T-cell (primary cell): ENCODE measurements at regions of chr16 and their contacts with region 1.

Region 1: GRCh38 chr16:10509534-10510025 is 70.8 kb downstream of the EMP2 start:
- DNase-seq: peak; percentile 15 to 86 (median 46)
- ATAC-seq: peak; percentile 87 to 92 (median 90)
- H3K4me3 ChIP-seq: no peak overlapping the region
- H3K4me3 Mint-ChIP-seq: no peak overlapping the region
- H3K27ac ChIP-seq: no peak overlapping the region
- H3K27ac Mint-ChIP-seq: no peak overlapping the region
- H3K4me1 ChIP-seq: no peaks in the 10 kb centered on the region
- H3K4me1 Mint-ChIP-seq: peaks cover 3 to 7% (median 4%) of the 10 kb centered on the region in 3 donors
- H3K27me3 ChIP-seq: no peaks in the 10 kb centered on the region
- H3K27me3 Mint-ChIP-seq: peaks cover 0 to 4% of the 10 kb centered on the region in 2 donors

Region 2: GRCh38 chr16:10314811-10315210 is 194.8 kb before region 1 on chr16:
- CTCF ChIA-PET with region 1: interaction called, 11 to 31 read pairs
- POLR2A ChIA-PET with region 1: no interaction called
- DNase-seq: peak in 1 of 35 experiments; percentile 56
- ATAC-seq: peak; percentile 63 to 74 (median 72)
- H3K4me3 ChIP-seq: no peak overlapping the region
- H3K4me3 Mint-ChIP-seq: no peak overlapping the region
- H3K27ac ChIP-seq: no peak overlapping the region
- H3K27ac Mint-ChIP-seq: peak overlapping the region in 1 of 2 donors; percentile 71
- H3K4me1 ChIP-seq: peaks cover 0 to 10% of the 10 kb centered on the region in 2 experiments
- H3K4me1 Mint-ChIP-seq: peaks cover 20 to 21% (median 20%) of the 10 kb centered on the region in 3 donors
- H3K27me3 ChIP-seq: no peaks in the 10 kb centered on the region
- H3K27me3 Mint-ChIP-seq: no peaks in the 10 kb centered on the region

Region 3: GRCh38 chr16:10368969-10369551 is 140.5 kb before region 1 on chr16:
- CTCF ChIA-PET with region 1: interaction called in 1 of 2 experiments, 11 read pairs
- POLR2A ChIA-PET with region 1: no interaction called
- DNase-seq: no peak
- ATAC-seq: no peak
- H3K4me3 ChIP-seq: no peak overlapping the region
- H3K4me3 Mint-ChIP-seq: no peak overlapping the region
- H3K27ac ChIP-seq: no peak overlapping the region
- H3K27ac Mint-ChIP-seq: no peak overlapping the region
- H3K4me1 ChIP-seq: no peaks in the 10 kb centered on the region
- H3K4me1 Mint-ChIP-seq: peaks cover 0 to 2% (median 0%) of the 10 kb centered on the region in 3 donors
- H3K27me3 ChIP-seq: no peaks in the 10 kb centered on the region
- H3K27me3 Mint-ChIP-seq: no peaks in the 10 kb centered on the region

Region 4: GRCh38 chr16:10625593-10626273 is 116.2 kb after region 1 on chr16:
- CTCF ChIA-PET with region 1: no interaction called
- POLR2A ChIA-PET with region 1: no interaction called
- DNase-seq: no peak
- ATAC-seq: no peak
- H3K4me3 ChIP-seq: no peak overlapping the region
- H3K4me3 Mint-ChIP-seq: no peak overlapping the region
- H3K27ac ChIP-seq: no peak overlapping the region
- H3K27ac Mint-ChIP-seq: no peak overlapping the region
- H3K4me1 ChIP-seq: no peaks in the 10 kb centered on the region
- H3K4me1 Mint-ChIP-seq: no peaks in the 10 kb centered on the region
- H3K27me3 ChIP-seq: peaks cover 0 to 13% of the 10 kb centered on the region in 2 experiments
- H3K27me3 Mint-ChIP-seq: peaks cover 0 to 2% of the 10 kb centered on the region in 2 donors

Region 5: DNA sequence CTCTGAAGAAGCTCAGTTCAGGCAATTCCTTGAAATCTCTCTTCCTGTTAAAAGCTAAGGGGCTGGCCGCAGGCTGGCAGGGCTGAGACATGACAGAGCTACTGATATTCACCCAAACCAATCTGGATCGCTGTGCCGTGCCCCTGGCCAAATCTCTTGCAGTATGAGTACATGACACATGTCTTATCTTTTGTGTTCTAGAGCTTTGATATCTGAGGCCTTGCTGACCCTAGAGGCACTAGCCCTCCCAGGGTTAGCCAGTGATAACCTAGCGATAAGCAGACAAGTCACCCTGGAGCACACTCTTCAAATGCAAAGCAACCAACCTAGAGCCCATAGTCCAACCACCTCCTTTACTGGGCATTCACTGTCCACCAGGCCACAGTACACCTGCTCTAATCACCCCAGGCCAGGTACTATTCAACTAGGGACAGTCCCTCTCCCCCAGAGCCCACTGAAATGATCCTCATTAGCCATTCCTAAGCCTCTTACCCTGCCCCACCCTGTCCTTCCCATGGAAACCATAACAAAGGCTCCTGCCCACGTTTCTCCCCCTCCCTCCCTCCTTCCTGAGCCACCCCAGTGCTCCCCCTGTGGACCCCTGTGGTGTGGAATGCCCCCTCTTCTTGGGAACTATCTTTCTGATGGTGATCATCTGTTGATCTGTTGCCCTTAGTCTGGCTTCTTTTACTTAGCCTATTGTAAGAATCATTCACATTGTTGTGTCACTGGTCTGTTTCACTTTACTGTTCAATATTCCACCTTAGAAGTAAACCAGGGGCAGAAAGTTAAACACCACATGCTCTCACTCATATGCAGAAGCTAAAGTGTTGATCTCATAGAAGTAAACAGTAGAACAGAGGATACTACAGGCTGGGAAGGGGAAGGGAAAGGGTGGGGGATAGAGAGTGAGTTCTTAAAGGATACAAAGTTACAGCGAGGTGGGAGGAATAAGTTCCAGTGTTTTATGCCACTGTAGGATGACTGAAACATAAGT is 132.7 kb after region 1 on chr16:
- CTCF ChIA-PET with region 1: no interaction called
- POLR2A ChIA-PET with region 1: no interaction called
- DNase-seq: no peak
- ATAC-seq: no peak
- H3K4me3 ChIP-seq: no peak overlapping the region
- H3K4me3 Mint-ChIP-seq: no peak overlapping the region
- H3K27ac ChIP-seq: no peak overlapping the region
- H3K27ac Mint-ChIP-seq: no peak overlapping the region
- H3K4me1 ChIP-seq: no peaks in the 10 kb centered on the region
- H3K4me1 Mint-ChIP-seq: no peaks in the 10 kb centered on the region
- H3K27me3 ChIP-seq: peaks cover 0 to 5% of the 10 kb centered on the region in 2 experiments
- H3K27me3 Mint-ChIP-seq: peaks cover 3 to 9% of the 10 kb centered on the region in 2 donors

Region 6: DNA sequence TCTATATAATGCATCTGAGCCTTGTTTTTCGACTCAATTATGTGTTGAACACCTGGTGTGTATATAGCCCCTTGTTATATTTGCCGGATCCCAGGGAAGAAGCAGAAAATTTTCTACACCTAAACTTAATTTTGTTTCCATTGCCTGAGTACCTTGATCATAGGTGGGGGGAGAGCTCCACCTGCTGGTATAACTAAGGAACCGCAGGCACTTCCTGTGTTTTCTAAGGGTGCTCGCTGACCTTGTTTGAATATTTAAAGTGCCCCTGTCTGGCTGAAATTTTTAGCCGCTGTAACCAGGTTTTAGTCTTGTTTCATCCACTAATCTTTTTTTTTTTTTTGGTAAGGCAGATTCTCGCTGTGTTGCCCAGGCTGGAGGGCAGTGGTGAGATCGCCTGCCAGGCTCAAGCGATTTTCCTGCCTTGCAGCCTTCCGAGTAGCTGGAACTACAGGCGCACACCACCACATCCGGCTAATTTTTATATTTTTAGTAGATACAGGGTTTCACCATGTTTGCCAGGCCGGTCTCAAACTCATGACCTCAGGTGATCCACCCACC is 227.6 kb after region 1 on chr16:
- CTCF ChIA-PET with region 1: interaction called, 26 to 56 read pairs
- POLR2A ChIA-PET with region 1: no interaction called
- DNase-seq: peak; percentile 31 to 88 (median 62)
- ATAC-seq: peak; percentile 77 to 85 (median 82)
- H3K4me3 ChIP-seq: peak overlapping the region in 1 of 2 donors; percentile 25
- H3K4me3 Mint-ChIP-seq: peak overlapping the region; percentile 23 to 72 (median 57)
- H3K27ac ChIP-seq: peak overlapping the region; percentile 49
- H3K27ac Mint-ChIP-seq: peak overlapping the region; percentile 86 to 87
- H3K4me1 ChIP-seq: peaks cover 0 to 19% of the 10 kb centered on the region in 2 experiments
- H3K4me1 Mint-ChIP-seq: peaks cover 10 to 26% (median 12%) of the 10 kb centered on the region in 3 donors
- H3K27me3 ChIP-seq: no peaks in the 10 kb centered on the region
- H3K27me3 Mint-ChIP-seq: no peaks in the 10 kb centered on the region

Region 7: DNA sequence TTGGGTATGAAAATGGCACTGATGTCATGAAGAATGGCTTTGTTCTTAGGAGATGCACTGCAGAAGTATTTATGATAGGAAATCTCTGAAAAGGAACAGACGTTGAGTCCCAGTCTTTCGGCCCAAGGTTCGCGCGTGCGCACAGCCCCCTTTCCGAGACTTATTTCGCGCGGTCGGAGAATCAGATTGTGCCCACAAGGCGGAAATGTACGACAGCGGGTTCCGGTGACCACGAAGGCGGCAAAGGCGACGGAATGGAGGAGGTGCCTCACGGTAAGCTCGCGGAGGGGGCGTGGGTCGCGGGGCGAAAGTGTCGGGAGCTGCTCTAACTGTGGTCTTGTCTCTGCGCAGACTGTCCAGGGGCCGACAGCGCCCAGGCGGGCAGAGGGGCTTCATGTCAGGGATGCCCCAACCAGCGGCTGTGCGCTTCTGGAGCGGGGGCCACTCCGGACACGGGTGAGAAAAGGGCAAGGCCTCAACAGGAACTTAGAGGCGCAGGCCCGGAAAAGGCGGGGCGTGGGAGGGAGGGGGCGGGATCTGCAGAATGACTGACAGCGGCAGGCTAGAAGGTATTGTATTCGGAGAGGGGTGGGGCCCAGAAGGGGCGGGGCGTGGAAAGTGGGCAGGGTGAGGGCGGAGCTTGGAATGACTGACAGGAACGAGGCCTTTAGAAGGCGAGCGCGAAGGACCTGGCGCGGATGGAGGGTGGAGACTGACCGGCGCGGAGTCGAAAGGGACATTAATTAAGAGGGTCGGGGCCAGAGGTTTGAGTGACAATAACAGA is 234.2 kb after region 1 on chr16 and contains the start of gene NUBP1:
- CTCF ChIA-PET with region 1: interaction called, 6 to 12 read pairs
- POLR2A ChIA-PET with region 1: no interaction called
- DNase-seq: peak; percentile 96 to 100 (median 98)
- ATAC-seq: peak; percentile 93 to 96 (median 96)
- H3K4me3 ChIP-seq: peak within 1 kb of the TSS; percentile 63 to 83
- H3K4me3 Mint-ChIP-seq: peak within 1 kb of the TSS; percentile 85 to 96 (median 87)
- H3K27ac ChIP-seq: peak within 1 kb of the TSS; percentile 81
- H3K27ac Mint-ChIP-seq: peak within 1 kb of the TSS; percentile 93 to 100
- H3K4me1 ChIP-seq: peaks cover 6 to 25% of the 10 kb centered on the region in 2 experiments
- H3K4me1 Mint-ChIP-seq: peaks cover 34 to 40% (median 39%) of the 10 kb centered on the region in 3 donors
- H3K27me3 ChIP-seq: no peaks in the 10 kb centered on the region
- H3K27me3 Mint-ChIP-seq: no peaks in the 10 kb centered on the region
- total RNA-seq, gene NUBP1: 17.5 to 29.4 (median 25.9) TPM